OCI-LY7 (cell line): ENCODE measurements at regions of chr12 and their contacts with region 1.

Region 1: DNA sequence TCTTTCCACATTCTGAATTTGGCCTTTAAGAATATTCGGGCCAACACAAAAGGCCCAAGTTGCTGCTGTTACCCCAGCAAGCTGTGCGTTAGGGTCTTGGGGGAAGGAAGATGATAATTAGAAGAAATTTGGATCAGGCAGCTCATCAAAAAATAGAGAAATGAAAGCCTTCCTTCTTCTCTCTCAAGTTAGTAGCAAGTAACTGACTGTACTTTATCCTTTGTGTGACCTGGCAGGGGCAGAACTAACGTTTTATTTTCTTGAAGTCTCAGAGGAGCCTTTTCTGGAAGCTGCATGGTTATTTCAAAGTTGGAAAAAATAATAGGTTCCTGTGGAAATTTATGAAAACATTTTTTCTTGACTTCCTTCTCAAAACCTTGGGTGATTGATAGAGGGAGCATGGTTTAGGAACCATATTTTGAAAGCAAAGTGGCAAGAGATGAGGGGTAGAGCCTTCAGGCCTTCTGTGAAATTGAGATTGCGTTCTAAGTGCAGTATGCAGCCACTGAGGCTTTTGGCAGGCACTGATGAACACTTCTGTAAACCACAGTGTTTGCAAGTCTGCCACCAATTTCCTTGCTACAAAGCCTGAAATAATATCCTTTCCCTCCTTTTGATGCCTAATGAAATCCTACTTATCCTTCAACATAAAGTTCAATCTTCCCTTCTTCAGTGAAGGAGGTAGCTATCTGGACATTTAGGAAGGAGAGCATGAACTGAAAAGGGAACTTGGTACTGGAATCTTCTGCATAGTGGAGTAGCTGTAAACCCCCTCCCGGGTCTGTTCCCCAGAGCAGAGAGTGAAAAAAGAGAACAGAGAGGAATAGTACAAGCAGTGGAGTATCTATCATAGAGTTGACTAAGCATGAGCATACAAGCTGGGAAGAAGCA is 123.2 kb downstream of the FGD4 start:
- DNase-seq: peak; percentile 75
- H3K4me3 ChIP-seq: peak overlapping the region; percentile 47
- H3K27ac ChIP-seq: peak overlapping the region; percentile 92
- H3K4me1 ChIP-seq: peaks cover 67% of the 10 kb centered on the region
- CTCF ChIP-seq: no peak

Region 2: DNA sequence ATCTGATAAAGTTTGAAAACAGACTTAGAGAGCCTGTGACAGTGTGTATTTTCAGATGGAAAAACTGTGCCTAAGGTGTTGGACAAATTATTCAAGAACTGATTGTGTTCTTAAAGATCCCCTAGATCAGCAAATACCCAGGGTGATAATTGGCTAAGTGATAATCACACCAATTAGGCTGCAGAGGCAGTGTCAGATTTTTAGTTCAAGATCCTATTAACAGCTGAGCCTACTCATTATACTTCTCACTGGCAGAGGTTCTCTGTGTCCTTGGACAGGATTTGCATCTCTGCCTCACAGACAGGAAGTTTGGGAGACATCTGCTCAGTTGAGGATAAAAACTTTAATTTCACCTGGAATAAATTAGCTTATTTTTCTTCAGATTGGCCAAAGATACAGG is 127.5 kb before region 1 on chr12:
- CTCF ChIA-PET with region 1: no interaction called
- POLR2A ChIA-PET with region 1: no interaction called
- intact Hi-C with region 1: no loop called
- DNase-seq: no peak
- H3K4me3 ChIP-seq: no peak overlapping the region
- H3K27ac ChIP-seq: no peak overlapping the region
- H3K4me1 ChIP-seq: peaks cover 12% of the 10 kb centered on the region
- CTCF ChIP-seq: no peak

Region 3: DNA sequence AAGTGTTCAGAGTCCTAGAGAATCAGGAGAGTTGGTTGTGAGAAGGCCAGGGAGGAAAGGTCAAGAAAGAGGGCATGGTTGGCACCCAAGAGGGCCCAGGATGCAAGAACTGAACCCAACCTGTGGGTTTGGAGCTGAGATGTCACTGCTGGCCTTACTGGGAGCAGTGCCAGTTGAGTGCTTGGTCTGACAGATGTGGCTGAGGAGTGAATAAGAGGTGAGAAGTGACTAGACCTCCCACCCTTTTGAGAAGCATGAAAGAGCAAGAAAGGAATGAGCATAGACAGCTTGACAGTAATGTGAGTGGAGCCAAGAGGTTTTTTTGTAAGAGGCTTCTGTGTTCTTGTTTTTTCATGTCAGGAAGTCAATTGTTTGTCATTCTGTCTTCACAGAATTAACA is 27.9 kb before region 1 on chr12:
- CTCF ChIA-PET with region 1: no interaction called
- POLR2A ChIA-PET with region 1: interaction called, 10 read pairs
- intact Hi-C with region 1: no loop called
- DNase-seq: peak; percentile 30
- H3K4me3 ChIP-seq: no peak overlapping the region
- H3K27ac ChIP-seq: peak overlapping the region; percentile 36
- H3K4me1 ChIP-seq: peaks cover 71% of the 10 kb centered on the region
- CTCF ChIP-seq: no peak

Region 4: DNA sequence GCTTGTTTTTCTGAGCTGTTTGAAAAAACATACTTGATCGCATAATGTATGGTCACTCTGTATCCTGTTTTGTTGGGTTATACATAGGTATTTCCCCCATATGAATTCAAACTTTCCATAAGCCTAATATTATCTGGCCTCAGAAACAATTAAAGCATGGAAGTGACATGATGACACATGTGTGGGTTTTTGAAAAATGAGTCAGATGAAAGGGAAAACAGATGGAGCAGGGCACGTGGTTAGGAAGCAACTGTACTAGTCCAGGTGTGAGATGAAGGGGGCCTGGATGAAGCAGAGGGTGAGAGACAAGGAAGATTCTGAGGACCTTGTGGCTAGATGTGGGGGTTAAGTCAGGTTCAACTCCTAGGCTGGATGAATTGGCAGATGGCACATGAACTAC is 63.8 kb after region 1 on chr12:
- CTCF ChIA-PET with region 1: no interaction called
- POLR2A ChIA-PET with region 1: no interaction called
- intact Hi-C with region 1: no loop called
- DNase-seq: no peak
- H3K4me3 ChIP-seq: no peak overlapping the region
- H3K27ac ChIP-seq: no peak overlapping the region
- H3K4me1 ChIP-seq: peaks cover 20% of the 10 kb centered on the region
- CTCF ChIP-seq: no peak